CD8-positive, alpha-beta T cell (primary cell): ENCODE measurements at regions of chr9 and their contacts with region 1.

Region 1: DNA sequence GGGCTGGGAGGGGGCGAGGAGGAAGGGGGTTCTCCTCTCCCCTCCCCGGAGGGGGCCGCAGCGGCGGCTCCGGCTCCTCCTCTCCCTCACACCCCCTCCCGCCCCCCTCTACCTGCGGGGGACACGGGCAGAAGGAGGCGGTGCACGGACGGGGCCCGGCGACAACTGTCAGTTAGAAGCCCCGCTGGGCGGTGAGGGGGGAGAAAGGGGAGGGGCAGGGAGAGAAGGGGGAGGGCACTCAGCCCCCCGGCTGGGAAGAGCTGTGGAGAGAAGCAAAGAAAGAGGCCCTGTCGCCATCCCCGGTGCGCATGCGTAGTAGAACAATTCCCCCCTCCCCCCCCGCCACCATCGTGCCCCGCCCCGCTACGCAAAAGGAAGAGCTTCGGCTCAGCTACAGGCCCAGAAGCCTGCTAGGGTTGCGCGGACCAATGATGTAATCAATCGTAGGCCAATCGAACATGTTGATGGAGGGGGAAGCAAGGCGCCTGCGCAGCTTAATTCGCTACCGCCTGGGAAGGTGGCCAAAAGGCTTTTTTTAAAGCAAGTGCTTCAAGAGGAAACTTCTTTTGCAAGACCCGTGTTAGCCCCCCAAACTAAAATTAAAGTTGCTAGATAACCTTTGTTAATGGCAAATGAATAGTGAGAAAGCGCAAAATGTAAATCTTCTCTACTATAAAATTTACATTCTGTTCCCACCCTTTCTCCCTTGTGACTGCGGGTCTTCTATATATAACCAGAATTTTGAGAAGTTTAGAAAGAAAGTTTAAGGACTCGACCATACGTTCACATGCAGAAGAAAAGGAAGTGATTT is 7.0 kb downstream of the RANBP6 start:
- DNase-seq: peak; percentile 89 to 99 (median 93)
- ATAC-seq: peak; percentile 72
- H3K4me3 ChIP-seq: peak overlapping the region; percentile 75 to 77
- H3K4me3 Mint-ChIP-seq: peak overlapping the region; percentile 85
- H3K27ac ChIP-seq: peak overlapping the region; percentile 82 to 94
- H3K27ac Mint-ChIP-seq: peak overlapping the region; percentile 89
- H3K4me1 ChIP-seq: peaks cover 32% of the 10 kb centered on the region
- H3K4me1 Mint-ChIP-seq: peaks cover 54% of the 10 kb centered on the region
- H3K27me3 ChIP-seq: no peaks in the 10 kb centered on the region
- H3K27me3 Mint-ChIP-seq: no peaks in the 10 kb centered on the region
- CTCF ChIP-seq: no peak

Region 2: GRCh38 chr9:4792572-4793458 is 1215.6 kb before region 1 on chr9 and contains the start of gene RCL1:
- CTCF ChIA-PET with region 1: no interaction called
- POLR2A ChIA-PET with region 1: interaction called, 3 read pairs
- intact Hi-C with region 1: loop called (anchors 1 to 5 kb)
- DNase-seq: peak; percentile 92 to 98 (median 95)
- ATAC-seq: peak; percentile 90
- H3K4me3 ChIP-seq: peak within 1 kb of the TSS; percentile 92 to 98
- H3K4me3 Mint-ChIP-seq: peak within 1 kb of the TSS; percentile 95
- H3K27ac ChIP-seq: peak within 1 kb of the TSS; percentile 90 to 92
- H3K27ac Mint-ChIP-seq: peak within 1 kb of the TSS; percentile 96
- H3K4me1 ChIP-seq: peaks cover 30% of the 10 kb centered on the region
- H3K4me1 Mint-ChIP-seq: peaks cover 47% of the 10 kb centered on the region
- H3K27me3 ChIP-seq: no peaks in the 10 kb centered on the region
- H3K27me3 Mint-ChIP-seq: no peaks in the 10 kb centered on the region
- CTCF ChIP-seq: no peak
- total RNA-seq, gene RCL1: 30.8 to 35.0 TPM

Region 3: DNA sequence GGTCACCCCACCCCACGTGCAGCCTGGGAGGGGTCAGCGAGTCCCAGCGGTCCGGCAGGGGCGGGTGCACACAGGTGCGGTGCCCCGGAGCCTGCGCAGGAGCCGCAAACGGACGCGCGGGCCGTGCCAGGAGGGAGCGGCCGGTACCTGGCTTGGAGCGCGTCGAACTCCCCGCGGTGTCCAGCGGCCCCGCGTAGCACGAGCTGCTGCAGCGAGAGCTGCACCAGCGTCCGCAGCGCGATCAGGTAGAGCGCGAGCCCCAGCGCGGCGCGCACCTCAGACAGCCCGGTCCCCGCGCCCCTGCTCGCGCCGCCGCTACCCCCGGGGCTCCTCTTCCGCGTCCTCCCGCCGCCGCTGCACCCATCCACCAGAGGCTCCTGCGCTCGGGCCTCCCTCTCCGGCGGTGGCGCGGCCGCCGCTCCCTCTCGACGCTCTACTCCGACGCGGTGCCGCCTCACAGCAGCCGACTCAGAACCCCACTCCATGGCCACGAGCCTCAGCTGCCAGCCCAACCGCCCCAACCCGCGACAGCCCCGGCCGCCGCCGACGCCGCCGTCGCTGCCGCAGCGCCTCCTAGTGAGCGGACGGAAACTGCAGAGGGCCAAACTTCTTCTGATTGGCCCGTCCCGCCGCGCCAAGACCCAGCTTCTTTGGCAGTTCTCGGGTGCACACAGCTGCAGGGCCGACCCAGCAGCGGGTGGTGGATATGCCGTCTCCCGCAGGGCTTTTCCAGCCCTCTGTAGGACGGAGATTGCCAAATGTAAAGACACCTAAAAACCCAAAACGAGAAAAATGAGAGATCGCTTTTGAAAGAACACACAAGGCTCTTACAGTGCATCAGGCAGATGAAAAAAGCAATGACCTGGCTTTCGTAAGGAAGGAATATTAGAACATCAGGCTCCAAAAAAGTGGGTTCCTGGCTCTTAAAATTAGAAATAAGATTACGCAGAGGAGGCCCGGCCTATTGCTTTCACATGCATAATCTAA is 175.5 kb before region 1 on chr9 and contains the start of gene ERMP1:
- CTCF ChIA-PET with region 1: interaction called, 5 read pairs
- POLR2A ChIA-PET with region 1: interaction called, 19 read pairs
- intact Hi-C with region 1: loop called (anchors 2 to 5 kb)
- DNase-seq: peak; percentile 85 to 95 (median 92)
- ATAC-seq: peak; percentile 87
- H3K4me3 ChIP-seq: peak within 1 kb of the TSS; percentile 57 to 91
- H3K4me3 Mint-ChIP-seq: peak within 1 kb of the TSS; percentile 96
- H3K27ac ChIP-seq: peak within 1 kb of the TSS in 1 of 2 experiments; percentile 41
- H3K27ac Mint-ChIP-seq: peak within 1 kb of the TSS; percentile 88
- H3K4me1 ChIP-seq: peaks cover 34% of the 10 kb centered on the region
- H3K4me1 Mint-ChIP-seq: peaks cover 66% of the 10 kb centered on the region
- H3K27me3 ChIP-seq: no peaks in the 10 kb centered on the region
- H3K27me3 Mint-ChIP-seq: no peaks in the 10 kb centered on the region
- CTCF ChIP-seq: peak; percentile 83
- total RNA-seq, gene ERMP1: 5.2 to 7.9 TPM

Region 4: GRCh38 chr9:6055213-6055612 is 46.8 kb after region 1 on chr9:
- CTCF ChIA-PET with region 1: no interaction called
- POLR2A ChIA-PET with region 1: no interaction called
- intact Hi-C with region 1: loop called in 1 of 2 experiments (anchors 5 kb)
- DNase-seq: peak in 4 of 9 experiments; percentile 32 to 80 (median 59)
- ATAC-seq: peak; percentile 69
- H3K4me3 ChIP-seq: no peak overlapping the region
- H3K4me3 Mint-ChIP-seq: no peak overlapping the region
- H3K27ac ChIP-seq: no peak overlapping the region
- H3K27ac Mint-ChIP-seq: no peak overlapping the region
- H3K4me1 ChIP-seq: no peaks in the 10 kb centered on the region
- H3K4me1 Mint-ChIP-seq: peaks cover 3% of the 10 kb centered on the region
- H3K27me3 ChIP-seq: no peaks in the 10 kb centered on the region
- H3K27me3 Mint-ChIP-seq: peaks cover 5% of the 10 kb centered on the region
- CTCF ChIP-seq: peak; percentile 40

Region 5: DNA sequence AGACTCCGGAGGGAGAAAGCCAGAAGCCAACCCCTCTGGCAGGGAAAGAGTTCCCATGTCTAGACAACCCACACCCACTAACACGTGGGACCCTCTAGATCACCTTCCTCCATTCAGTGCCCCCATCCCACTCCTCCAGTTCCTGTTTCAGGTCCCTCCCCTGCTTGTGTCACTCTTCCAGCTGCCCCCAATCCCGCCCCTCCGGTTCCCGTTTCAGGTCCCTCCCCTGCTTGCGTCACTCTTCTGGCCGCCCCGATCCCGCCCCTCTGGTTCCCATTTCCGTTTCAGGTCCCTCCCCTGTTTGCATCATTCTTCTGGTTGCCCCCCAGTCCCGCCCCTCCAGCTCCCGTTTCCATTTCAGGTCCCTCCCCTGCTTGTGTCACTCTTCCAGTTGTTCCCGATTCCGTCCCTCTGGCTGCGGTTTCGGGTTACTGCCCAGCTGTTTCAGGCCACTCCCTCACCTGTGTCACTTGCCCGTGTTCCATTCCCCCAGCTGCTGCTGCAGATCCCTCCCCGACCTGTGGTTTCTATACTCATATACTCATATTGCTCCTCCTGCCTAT is 71.9 kb after region 1 on chr9:
- CTCF ChIA-PET with region 1: no interaction called
- POLR2A ChIA-PET with region 1: no interaction called
- intact Hi-C with region 1: loop called in 1 of 2 experiments (anchors 2 kb)
- DNase-seq: peak; percentile 34 to 90 (median 68)
- ATAC-seq: peak; percentile 89
- H3K4me3 ChIP-seq: peak overlapping the region; percentile 61 to 71
- H3K4me3 Mint-ChIP-seq: peak overlapping the region; percentile 93
- H3K27ac ChIP-seq: peak overlapping the region; percentile 46 to 67
- H3K27ac Mint-ChIP-seq: peak overlapping the region; percentile 90
- H3K4me1 ChIP-seq: no peaks in the 10 kb centered on the region
- H3K4me1 Mint-ChIP-seq: peaks cover 9% of the 10 kb centered on the region
- H3K27me3 ChIP-seq: no peaks in the 10 kb centered on the region
- H3K27me3 Mint-ChIP-seq: peaks cover 4% of the 10 kb centered on the region
- CTCF ChIP-seq: no peak

Region 6: DNA sequence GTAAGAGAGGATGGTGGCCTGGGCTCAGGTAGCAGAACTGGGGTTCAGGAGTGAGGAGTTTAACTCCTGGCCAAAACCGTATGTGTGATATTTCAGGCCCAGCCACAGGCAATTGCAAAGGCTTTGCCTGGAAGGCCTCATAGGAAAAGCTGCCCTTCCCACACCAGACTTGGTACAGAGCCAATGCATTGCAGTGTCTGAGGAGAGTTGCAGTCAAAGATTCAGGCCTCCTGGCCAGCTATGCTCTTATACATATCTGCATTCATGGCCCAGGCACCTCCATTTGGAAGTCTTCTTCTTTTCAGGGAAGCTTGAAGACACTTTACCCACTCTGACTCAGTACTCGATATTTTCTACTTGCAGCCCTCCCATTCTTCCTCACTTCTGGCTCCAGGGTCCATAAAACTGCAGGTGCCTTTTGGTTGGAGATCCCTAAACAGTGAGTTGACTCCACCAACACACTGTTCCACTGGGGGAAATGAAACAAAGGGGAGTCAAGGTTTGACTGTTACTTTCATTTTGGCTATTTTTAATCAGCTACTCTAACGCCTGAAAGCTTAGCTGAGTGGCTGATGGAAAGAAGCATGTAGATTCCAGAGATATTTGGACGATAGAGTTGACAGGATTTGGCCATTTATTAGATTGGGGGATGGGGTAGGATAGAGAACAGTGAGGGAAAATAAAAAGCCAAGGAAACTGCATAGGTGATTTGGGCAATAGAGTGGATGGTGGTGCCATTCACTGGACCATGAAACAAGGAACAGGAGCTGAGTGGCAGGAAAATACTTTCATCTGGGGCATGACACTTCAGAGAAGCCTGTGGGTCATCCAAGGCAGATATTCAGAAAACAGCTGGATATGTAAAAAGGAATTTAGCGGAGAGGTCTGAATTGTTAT is 176.6 kb after region 1 on chr9:
- CTCF ChIA-PET with region 1: no interaction called
- POLR2A ChIA-PET with region 1: no interaction called
- intact Hi-C with region 1: no loop called
- DNase-seq: no peak
- ATAC-seq: no peak
- H3K4me3 ChIP-seq: no peak overlapping the region
- H3K4me3 Mint-ChIP-seq: no peak overlapping the region
- H3K27ac ChIP-seq: no peak overlapping the region
- H3K27ac Mint-ChIP-seq: no peak overlapping the region
- H3K4me1 ChIP-seq: no peaks in the 10 kb centered on the region
- H3K4me1 Mint-ChIP-seq: no peaks in the 10 kb centered on the region
- H3K27me3 ChIP-seq: no peaks in the 10 kb centered on the region
- H3K27me3 Mint-ChIP-seq: peaks cover 30% of the 10 kb centered on the region
- CTCF ChIP-seq: no peak

Region 7: DNA sequence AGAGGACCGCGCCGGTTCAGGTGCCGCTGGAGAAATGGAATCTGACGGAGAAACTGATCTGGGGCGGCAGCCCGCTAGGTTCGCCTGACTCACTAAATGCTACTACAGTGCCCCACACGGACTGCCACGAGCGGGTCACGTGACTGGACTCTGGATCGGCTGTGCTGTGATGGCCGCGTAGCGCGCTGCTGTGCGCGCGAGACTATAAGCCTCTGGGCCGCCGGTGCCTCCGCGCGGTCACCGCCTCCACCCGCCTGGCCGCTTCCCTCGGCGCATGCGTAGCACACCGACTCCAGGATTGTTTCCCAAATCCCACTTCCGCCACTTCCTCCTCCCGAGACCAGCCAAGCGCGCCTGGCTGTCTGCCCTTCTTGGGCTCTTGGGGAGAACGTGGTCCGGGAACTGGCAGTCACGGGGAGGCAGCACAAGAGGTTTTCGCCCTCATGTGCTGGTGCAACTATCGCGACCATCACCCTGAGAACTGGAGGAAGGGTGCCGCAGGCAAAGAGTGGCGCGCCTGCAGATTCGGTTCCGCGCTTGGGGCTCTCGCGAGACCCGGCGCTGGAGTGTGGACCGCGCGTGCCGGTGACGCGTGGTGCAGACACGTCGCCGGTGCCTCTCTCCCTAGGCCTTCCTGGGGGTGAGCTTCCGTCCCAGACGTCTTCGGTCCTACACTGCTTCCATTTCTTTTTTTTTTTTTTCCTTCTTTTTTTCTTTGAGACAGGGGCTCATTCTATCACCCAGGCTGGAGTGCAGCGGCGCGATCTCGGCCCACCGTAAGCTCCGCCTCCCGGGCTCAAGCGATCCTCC is 673.0 kb after region 1 on chr9:
- CTCF ChIA-PET with region 1: no interaction called
- POLR2A ChIA-PET with region 1: no interaction called
- intact Hi-C with region 1: loop called in 1 of 2 experiments (anchors 5 kb)
- DNase-seq: peak; percentile 77 to 96 (median 89)
- ATAC-seq: peak; percentile 85
- H3K4me3 ChIP-seq: peak overlapping the region; percentile 84 to 97
- H3K4me3 Mint-ChIP-seq: peak overlapping the region; percentile 93
- H3K27ac ChIP-seq: peak overlapping the region; percentile 94 to 96
- H3K27ac Mint-ChIP-seq: peak overlapping the region; percentile 98
- H3K4me1 ChIP-seq: peaks cover 11% of the 10 kb centered on the region
- H3K4me1 Mint-ChIP-seq: peaks cover 22% of the 10 kb centered on the region
- H3K27me3 ChIP-seq: no peaks in the 10 kb centered on the region
- H3K27me3 Mint-ChIP-seq: no peaks in the 10 kb centered on the region
- CTCF ChIP-seq: no peak

Region 8: DNA sequence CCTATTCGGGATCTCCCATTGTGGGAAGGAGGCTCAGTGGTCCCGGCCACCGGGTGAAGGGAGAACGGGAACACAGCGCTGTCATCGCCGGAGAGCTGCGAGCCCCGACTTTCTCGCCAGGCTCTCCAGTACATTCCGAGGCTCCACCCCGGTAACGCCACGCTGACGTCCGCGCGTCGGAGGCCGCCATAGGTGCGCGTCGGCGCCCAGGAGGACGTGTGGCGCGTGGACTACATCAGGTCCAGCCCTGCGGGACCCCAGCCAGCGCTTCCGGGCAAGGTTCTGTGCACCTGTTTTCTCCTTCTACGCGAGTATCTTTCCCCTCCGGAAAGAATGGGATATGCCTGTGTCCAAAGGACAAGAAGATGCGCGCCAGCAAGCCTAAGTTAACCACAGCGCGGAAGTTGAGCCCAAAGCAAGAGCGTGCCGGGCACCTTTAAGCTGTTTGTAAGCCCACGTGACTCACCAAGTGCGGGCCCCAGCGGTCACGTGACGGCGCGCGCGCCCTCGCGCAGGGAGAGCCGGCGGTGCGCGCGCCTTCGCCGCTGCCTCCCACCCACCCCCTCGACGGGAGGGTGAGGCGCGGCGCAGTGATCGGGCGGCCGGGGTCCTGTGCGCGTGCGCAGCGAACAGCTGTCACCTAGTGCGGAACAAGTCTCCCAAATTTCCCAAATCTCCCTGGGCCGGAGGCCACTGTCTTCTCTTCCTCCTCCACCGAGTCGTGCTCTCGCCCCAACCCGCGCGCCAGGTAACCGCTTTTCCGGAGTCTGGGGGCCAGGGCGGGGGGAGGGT is 749.3 kb after region 1 on chr9 and contains the start of gene KDM4C:
- CTCF ChIA-PET with region 1: no interaction called
- POLR2A ChIA-PET with region 1: interaction called, 9 read pairs
- intact Hi-C with region 1: loop called in 1 of 2 experiments (anchors 5 kb)
- DNase-seq: peak; percentile 88 to 98 (median 94)
- ATAC-seq: peak; percentile 74
- H3K4me3 ChIP-seq: peak within 1 kb of the TSS; percentile 79 to 80
- H3K4me3 Mint-ChIP-seq: peak within 1 kb of the TSS; percentile 96
- H3K27ac ChIP-seq: peak within 1 kb of the TSS; percentile 97
- H3K27ac Mint-ChIP-seq: peak within 1 kb of the TSS; percentile 100
- H3K4me1 ChIP-seq: peaks cover 15% of the 10 kb centered on the region
- H3K4me1 Mint-ChIP-seq: peaks cover 39% of the 10 kb centered on the region
- H3K27me3 ChIP-seq: no peaks in the 10 kb centered on the region
- H3K27me3 Mint-ChIP-seq: no peaks in the 10 kb centered on the region
- CTCF ChIP-seq: no peak
- total RNA-seq, gene KDM4C: 51.6 to 54.6 TPM